Activated CD4-positive, alpha-beta memory T cell treated with anti-CD3 and anti-CD28 coated beads for 36 hours (primary cell): ENCODE measurements at regions of chr6 and their contacts with region 1.

Region 1: GRCh38 chr6:32971581-32972352 is 3.4 kb downstream of the BRD2 start:
- DNase-seq: peak; percentile 100
- H3K4me3 Mint-ChIP-seq: peak overlapping the region; percentile 98
- H3K27ac Mint-ChIP-seq: peak overlapping the region; percentile 99
- H3K4me1 Mint-ChIP-seq: peaks cover 26% of the 10 kb centered on the region
- H3K27me3 Mint-ChIP-seq: no peaks in the 10 kb centered on the region

Region 2: DNA sequence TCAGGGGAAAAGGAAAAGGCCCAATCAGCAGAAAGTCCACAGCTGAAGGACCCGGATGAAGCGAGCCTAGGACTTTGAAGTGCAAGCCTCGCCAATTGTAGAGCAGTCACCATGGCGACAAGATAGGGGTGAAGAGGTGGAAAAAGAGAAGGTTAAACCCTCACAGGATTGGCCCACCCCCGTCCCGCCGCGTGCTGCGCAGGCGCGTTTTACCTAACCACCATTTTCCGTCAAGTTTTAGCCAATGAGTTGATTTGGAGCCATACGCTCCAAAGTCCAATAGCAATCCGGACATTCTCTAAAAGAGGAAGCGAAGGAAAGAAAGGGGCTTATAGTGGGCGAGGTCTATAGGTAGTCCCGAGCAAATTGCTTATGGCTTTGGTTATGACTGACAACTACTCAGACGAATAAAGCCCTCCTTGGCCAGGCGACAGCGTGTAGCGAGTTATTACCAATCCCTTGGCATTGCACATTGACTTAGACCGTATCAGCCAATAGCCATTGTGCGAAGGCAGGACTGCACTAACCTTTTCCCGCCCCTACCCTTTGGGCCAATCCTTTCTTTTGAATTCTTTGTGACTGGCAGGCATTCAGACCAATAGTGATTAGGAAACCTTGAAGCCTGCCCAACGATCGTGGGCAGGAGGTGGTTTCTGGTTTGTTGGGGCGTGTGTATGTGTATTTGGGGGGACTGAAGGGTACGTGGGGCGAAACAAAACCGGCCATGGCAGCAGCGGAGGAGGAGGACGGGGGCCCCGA is 793.8 kb before region 1 on chr6 and contains the start of gene RNF5:
- CTCF ChIA-PET with region 1: interaction called, 5 read pairs
- POLR2A ChIA-PET with region 1: no interaction called
- intact Hi-C with region 1: loop called (anchors 5 kb)
- DNase-seq: peak; percentile 96
- H3K4me3 Mint-ChIP-seq: peak within 1 kb of the TSS; percentile 85
- H3K27ac Mint-ChIP-seq: peak within 1 kb of the TSS; percentile 96
- H3K4me1 Mint-ChIP-seq: peaks cover 65% of the 10 kb centered on the region
- H3K27me3 Mint-ChIP-seq: no peaks in the 10 kb centered on the region
- total RNA-seq, gene RNF5: 60.8 to 63.8 TPM

Region 3: DNA sequence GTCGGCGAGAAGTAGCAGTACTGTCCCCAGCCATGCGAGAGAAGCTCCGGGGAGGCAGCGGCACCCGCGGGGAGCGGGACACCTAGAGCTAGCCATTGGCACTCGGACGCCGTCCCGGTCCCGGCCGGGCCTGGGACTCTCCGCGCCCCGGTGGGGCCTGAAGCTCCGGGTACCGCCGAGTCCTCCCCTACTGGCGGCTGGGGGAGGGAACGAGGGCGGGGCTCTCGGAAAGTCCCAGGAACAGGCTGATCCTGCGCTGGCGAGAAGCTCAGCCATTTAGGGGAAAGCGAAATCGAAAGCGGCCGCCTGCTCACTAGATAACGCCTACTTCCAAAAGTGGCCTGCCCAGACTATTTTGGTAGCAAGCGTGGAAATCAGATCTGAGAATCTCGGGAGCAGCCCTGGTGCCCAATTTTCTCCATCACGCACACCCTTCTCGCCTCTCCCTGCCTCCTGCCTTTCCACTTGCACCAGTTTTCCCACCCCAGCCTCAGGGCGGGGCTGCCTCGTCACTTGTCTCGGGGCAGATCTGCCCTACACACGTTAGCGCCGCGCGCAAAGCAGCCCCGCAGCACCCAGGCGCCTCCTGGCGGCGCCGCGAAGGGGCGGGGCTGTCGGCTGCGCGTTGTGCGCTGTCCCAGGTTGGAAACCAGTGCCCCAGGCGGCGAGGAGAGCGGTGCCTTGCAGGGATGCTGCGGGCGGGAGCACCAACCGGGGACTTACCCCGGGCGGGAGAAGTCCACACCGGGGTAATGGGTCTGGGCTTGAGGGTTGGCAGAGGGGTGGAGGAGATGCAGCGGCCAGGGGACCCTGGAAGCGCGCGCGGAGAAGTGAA is 118.0 kb before region 1 on chr6 and contains the starts of genes PSMB9 and TAP1:
- CTCF ChIA-PET with region 1: interaction called, 30 read pairs
- POLR2A ChIA-PET with region 1: interaction called, 97 read pairs
- intact Hi-C with region 1: loop called (anchors 1 kb)
- DNase-seq: peak; percentile 97
- H3K4me3 Mint-ChIP-seq: peak within 1 kb of the TSS; percentile 99
- H3K27ac Mint-ChIP-seq: peak within 1 kb of the TSS; percentile 98
- H3K4me1 Mint-ChIP-seq: peaks cover 54% of the 10 kb centered on the region
- H3K27me3 Mint-ChIP-seq: no peaks in the 10 kb centered on the region
- total RNA-seq, gene PSMB9: 296 to 302 TPM
- total RNA-seq, gene TAP1: 245 to 258 TPM

Region 4: GRCh38 chr6:32933636-32934085 is 38.1 kb before region 1 on chr6:
- CTCF ChIA-PET with region 1: interaction called, 61 read pairs
- POLR2A ChIA-PET with region 1: interaction called, 59 read pairs
- intact Hi-C with region 1: loop called (anchors 5 kb)
- DNase-seq: peak; percentile 84
- H3K4me3 Mint-ChIP-seq: no peak overlapping the region
- H3K27ac Mint-ChIP-seq: no peak overlapping the region
- H3K4me1 Mint-ChIP-seq: no peaks in the 10 kb centered on the region
- H3K27me3 Mint-ChIP-seq: no peaks in the 10 kb centered on the region

Region 5: DNA sequence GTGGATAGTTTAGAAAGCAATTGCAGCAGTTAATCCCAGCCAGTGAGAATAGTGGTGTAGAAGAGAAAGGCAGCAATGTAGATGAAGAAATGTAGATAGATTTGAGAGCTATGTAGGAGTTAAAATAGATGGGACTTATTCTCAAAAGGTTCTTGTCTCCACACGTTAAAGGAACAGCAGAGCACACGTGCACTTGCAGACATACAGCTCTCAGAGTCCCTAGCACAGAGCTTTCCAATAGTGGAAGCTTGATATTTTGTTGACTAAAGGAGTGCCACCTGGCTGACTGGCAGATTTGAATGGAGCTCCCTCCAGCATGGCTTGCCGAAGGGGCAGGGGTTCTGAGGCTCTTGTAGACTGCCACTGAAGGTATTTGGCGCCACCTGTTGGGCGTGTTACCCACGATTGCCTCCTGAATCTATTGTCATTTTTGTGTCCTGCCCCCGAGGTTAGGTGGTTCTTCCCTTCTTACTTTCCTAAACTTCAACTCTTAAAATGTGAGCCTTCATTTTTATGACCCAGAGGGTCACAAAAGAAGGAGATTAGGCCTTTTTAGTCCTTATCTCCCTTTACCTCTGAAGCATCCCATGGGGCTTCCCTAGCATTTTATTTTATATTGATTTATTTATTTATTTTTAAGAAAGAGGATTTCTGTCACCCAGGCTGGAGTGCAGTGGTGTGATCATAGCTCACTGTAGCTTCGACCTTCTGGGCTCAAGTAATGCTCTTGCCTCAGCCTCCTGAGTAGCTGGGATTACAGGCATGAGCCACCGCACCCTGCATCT is 13.0 kb after region 1 on chr6:
- CTCF ChIA-PET with region 1: interaction called, 267 read pairs
- POLR2A ChIA-PET with region 1: interaction called, 125 read pairs
- intact Hi-C with region 1: no loop called
- DNase-seq: peak; percentile 93
- H3K4me3 Mint-ChIP-seq: no peak overlapping the region
- H3K27ac Mint-ChIP-seq: no peak overlapping the region
- H3K4me1 Mint-ChIP-seq: peaks cover 19% of the 10 kb centered on the region
- H3K27me3 Mint-ChIP-seq: no peaks in the 10 kb centered on the region

Region 6: DNA sequence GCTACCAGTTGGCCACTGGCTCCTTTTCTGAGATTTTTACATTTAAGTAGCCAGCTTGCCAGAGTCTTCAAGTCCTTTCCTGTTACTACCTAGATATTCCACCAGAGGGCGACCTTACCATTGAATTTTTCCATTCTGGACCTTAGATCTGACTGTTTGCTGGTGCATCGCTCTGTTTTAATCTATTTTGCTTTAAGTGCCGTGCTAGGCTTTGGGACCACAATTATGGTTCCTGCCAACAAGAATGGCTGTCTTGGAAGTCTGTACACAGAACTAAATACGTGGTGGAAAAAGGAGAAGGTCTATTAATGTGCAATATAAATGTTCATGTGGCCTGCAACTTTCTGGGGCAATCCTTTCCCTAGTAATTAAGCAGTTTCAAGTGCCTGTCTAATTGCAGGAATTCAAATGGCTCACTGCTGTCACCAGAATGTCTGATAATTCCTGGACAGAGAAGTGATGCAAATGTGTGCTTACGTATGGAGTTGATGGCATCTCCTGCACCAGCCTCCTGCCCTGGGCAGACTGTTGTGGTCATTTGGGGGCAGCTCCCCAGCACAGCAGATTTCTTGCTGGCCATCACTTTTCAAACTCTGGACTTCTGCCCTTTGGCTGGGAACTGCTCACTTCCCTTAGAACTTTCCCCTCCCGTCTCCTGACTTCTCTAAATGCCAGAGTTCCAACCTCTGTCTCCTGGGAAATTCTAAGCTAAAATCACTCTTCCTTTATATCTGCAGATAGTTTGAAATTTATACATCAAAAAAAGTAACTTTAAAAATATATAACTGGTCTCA is 43.3 kb after region 1 on chr6:
- CTCF ChIA-PET with region 1: no interaction called
- POLR2A ChIA-PET with region 1: no interaction called
- intact Hi-C with region 1: no loop called
- DNase-seq: peak; percentile 34
- H3K4me3 Mint-ChIP-seq: no peak overlapping the region
- H3K27ac Mint-ChIP-seq: no peak overlapping the region
- H3K4me1 Mint-ChIP-seq: peaks cover 12% of the 10 kb centered on the region
- H3K27me3 Mint-ChIP-seq: peaks cover 15% of the 10 kb centered on the region

Region 7: DNA sequence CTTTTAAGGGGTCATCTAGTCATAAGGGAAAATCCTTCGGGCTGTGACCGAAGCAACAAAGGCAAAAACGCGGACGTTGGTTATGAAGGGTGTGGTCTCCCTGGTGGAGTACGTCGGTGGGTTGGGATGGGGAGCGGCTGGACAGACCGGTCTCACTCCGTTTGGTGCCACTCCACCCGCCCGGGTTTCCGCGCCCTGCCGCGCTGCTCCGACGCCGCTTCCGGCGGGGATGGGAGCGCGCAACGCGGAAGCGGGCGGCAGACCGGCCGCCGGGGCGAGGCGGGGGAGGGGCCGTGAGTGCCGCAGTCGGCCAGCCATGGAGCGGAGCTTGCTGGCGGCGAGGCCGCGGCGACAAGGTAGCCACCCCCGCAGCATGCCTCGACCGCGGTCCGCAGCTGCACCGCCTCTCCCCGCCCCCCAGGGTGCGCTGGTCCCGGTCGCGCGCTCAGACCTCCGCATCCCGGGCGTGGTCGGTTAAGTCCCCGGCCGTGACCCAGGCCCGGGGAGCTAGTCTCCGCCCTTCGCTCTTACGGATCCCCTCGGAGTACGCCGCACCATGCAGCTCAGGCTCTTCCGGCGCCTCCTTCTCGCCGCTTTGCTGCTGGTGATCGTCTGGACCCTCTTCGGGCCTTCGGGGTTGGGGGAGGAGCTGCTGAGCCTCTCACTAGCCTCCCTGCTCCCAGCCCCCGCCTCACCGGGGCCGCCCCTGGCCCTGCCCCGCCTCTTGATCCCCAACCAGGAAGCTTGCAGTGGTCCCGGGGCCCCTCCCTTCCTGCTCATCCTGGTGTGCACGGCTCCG is 305.3 kb after region 1 on chr6 and contains the start of gene B3GALT4:
- CTCF ChIA-PET with region 1: no interaction called
- POLR2A ChIA-PET with region 1: interaction called, 17 read pairs
- intact Hi-C with region 1: loop called (anchors 5 kb)
- DNase-seq: peak; percentile 85
- H3K4me3 Mint-ChIP-seq: peak within 1 kb of the TSS; percentile 94
- H3K27ac Mint-ChIP-seq: peak within 1 kb of the TSS; percentile 92
- H3K4me1 Mint-ChIP-seq: peaks cover 37% of the 10 kb centered on the region
- H3K27me3 Mint-ChIP-seq: no peaks in the 10 kb centered on the region
- total RNA-seq, gene B3GALT4: 5.9 to 6.7 TPM